GM13976 (cell line): ENCODE measurements at regions of chr11 and their contacts with region 1.

Region 1: DNA sequence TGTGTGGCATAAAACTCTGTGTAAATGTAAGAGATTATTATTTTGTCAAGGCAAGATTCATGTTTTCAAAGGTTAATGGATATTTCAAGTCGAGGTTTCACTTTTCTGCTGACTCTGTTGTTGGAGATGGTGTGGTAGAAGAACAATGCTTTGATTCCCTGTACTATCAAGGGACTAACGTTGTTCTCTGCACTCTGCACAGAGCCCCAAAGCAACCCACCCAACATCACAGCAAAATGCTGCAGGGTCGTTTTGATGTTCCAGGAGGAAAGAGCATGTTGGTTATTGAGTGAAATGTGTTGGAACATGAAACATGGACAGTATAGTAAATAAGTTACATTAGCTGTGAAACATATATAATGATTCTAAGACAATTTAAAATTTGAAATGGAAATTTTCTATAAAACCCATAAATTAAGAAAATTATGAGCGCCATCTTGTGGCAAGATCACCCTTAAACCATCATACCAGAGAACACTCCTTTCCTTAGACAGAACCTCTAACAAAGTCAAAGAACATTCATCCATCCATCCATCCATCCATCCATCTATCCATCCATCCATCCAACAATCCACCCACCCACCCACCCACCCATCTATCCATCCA is 164.4 kb upstream of the ZBED5 start:
- DNase-seq: peak; percentile 38
- CTCF ChIP-seq: no peak

Region 2: DNA sequence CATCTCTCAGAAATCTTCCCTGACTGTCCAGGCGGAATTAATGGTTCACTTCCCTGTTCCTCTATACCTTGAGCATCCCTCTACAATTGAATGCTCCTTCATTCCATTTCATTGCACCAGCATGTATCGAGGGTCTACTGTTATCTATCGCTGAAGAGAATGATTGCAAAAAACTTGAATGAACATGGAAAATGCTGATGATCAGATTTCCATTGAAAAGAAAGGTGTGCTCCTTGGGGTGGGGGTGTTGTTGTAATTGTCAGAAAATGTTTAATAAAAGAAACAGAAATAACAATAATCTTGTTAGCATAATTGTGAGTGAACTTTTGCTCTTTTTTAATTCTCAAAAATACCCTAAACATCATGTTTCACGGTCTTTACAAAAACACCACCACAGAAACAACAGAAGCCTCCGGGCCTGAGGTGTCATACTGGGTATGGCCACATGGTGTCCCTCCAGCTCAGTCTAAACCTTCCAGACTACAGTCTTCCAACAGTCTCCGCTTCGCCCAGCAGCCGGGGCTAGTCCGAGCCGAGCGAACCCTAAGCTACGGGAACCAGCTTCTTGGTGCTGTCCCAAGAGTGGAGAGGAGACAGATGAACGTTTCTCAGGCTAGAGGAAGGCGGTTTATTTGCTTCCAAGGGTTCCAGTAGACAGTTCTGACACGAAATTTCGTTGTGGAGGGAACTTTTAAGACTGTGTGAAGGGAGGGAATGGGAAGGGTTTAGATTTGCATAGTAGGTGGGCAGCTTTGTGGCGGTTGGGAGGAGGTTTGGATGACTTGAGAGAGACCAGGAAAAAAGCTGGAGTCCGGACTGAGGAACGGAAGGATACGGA is 88.6 kb before region 1 on chr11:
- in situ Hi-C with region 1: loop called (anchors 5 kb)
- DNase-seq: peak; percentile 75
- CTCF ChIP-seq: peak; percentile 79